ENCODE measurements at regions of chr11 and their contacts with region 1.

Region 1: GRCh38 chr11:58567889-58568512 is 7.7 kb downstream of the LPXN start:
- DNase-seq: peak; percentile 53
- H3K4me3 Mint-ChIP-seq: peak overlapping the region; percentile 34
- H3K27ac Mint-ChIP-seq: peak overlapping the region; percentile 28
- H3K4me1 Mint-ChIP-seq: peaks cover 56% of the 10 kb centered on the region
- H3K27me3 Mint-ChIP-seq: no peaks in the 10 kb centered on the region

Region 2: GRCh38 chr11:58629857-58630256 is 61.9 kb after region 1 on chr11:
- intact Hi-C with region 1: loop called (anchors 1 kb)
- DNase-seq: no peak
- H3K4me3 Mint-ChIP-seq: no peak overlapping the region
- H3K27ac Mint-ChIP-seq: no peak overlapping the region
- H3K4me1 Mint-ChIP-seq: peaks cover 10% of the 10 kb centered on the region
- H3K27me3 Mint-ChIP-seq: no peaks in the 10 kb centered on the region

Region 3: DNA sequence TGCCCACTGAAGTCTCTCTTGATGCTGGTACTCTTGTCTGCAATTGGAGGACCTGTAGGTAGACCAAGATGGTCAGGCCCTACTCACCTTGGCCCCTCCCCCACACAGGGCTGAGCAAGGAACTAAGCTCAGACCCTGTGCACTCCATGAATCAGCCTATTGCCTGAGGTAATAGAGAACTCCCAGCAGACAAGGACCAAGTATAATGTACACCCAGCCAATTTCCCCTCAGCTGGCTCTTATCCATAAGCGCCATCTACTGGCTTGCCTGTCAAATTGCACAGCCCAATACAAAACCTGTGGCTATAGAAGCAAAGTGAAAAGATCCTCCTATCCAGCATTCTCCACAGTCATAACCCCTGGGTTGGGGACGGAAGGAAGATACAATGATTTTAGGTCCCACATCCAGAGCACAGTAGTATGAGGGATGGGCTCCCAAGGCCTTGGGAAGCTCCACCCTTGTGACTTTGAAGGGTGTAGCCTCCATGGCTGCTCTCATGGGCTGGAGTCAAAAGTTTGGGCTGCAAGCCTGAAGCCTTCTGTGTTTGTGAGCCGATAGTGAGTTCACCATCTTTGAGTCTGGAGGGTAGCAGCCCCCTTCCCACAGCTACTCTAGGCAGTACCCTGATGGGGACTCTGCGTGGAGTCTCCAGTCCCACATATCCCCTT is 220.5 kb after region 1 on chr11:
- intact Hi-C with region 1: loop called (anchors 2 kb)
- DNase-seq: peak; percentile 34
- H3K4me3 Mint-ChIP-seq: no peak overlapping the region
- H3K27ac Mint-ChIP-seq: no peak overlapping the region
- H3K4me1 Mint-ChIP-seq: no peaks in the 10 kb centered on the region
- H3K27me3 Mint-ChIP-seq: peaks cover 5% of the 10 kb centered on the region

Measured in activated T-helper 1 cell treated with anti-CD3 and anti-CD28 coated beads, Interleukin-12 subunit alpha, Interleukin-12 subunit beta, Interleukin-2, Interleukin-4 antibody, amounts not matched to agents 30 ng/mL and 10 ng/mL and 1 ng/mL, durations not matched to agents 14 hours and 24 hours and 36 hours (primary cell).